ENCODE measurements at regions of chr11 and their contacts with region 1.

Region 1: DNA sequence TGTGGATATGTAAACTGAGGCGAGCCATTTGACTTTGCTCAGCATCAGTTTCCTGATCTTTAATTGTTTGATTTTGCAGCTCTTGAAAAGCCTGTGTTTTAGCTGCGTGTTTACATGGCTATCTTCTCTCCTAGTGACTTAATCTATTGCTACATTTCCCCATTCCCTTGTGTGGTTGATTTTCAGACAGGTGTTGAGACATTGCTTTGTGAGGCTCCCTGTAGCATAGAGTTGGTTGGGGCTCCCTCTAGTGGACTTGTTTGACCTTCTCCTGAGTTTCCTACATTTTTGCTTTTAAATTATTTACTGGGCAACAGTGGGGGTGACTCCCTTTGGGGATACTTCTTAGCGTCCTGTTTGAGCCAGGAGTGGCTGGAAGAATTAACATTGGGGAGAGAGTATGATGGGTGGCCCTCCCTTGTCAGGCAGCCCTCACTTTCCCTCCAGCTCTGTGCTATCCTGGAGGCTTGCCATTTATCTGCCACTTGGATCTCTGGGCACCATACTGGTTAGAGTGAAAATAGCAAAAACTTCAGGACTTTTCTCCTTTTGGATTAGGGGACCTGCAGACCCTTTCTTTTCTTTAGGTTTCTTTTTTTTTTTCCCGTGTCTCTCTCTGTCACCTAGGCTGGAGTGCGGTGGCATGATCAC is 9.2 kb upstream of the CBL start:
- DNase-seq: peak; percentile 81
- H3K4me3 ChIP-seq: no peak overlapping the region
- H3K27ac ChIP-seq: no peak overlapping the region
- H3K4me1 ChIP-seq: no peaks in the 10 kb centered on the region
- H3K27me3 ChIP-seq: no peaks in the 10 kb centered on the region
- CTCF ChIP-seq: peak; percentile 69 to 70
- POLR2A ChIP-seq: no peak

Region 2: GRCh38 chr11:119095066-119095880 is 101.7 kb before region 1 on chr11:
- CTCF ChIA-PET with region 1: interaction called, 16 read pairs
- POLR2A ChIA-PET with region 1: interaction called, 8 read pairs
- dilution Hi-C with region 1: no loop called
- intact Hi-C with region 1: loop called (anchors 1 kb)
- DNase-seq: peak; percentile 100
- H3K4me3 ChIP-seq: peak overlapping the region; percentile 70 to 95 (median 90)
- H3K27ac ChIP-seq: peak overlapping the region; percentile 59
- H3K4me1 ChIP-seq: peaks cover 27% of the 10 kb centered on the region
- H3K27me3 ChIP-seq: no peaks in the 10 kb centered on the region
- CTCF ChIP-seq: peak in 1 of 2 donors; percentile 1
- POLR2A ChIP-seq: peak; percentile 100

Region 3: GRCh38 chr11:119101759-119102423 is 95.1 kb before region 1 on chr11 and contains the start of gene DPAGT1:
- CTCF ChIA-PET with region 1: interaction called, 27 read pairs
- POLR2A ChIA-PET with region 1: no interaction called
- dilution Hi-C with region 1: no loop called
- intact Hi-C with region 1: loop called (anchors 1 kb)
- DNase-seq: peak; percentile 96
- H3K4me3 ChIP-seq: peak within 1 kb of the TSS; percentile 81 to 97 (median 86)
- H3K27ac ChIP-seq: peak within 1 kb of the TSS; percentile 94
- H3K4me1 ChIP-seq: peaks cover 21% of the 10 kb centered on the region
- H3K27me3 ChIP-seq: no peaks in the 10 kb centered on the region
- CTCF ChIP-seq: no peak
- POLR2A ChIP-seq: no peak
- total RNA-seq, gene DPAGT1: 48.4 and 62.0 TPM in 2 replicates

Region 4: GRCh38 chr11:119168471-119169281 is 28.3 kb before region 1 on chr11 and contains the start of gene NLRX1:
- CTCF ChIA-PET with region 1: interaction called, 43 read pairs
- POLR2A ChIA-PET with region 1: interaction called, 4 read pairs
- dilution Hi-C with region 1: no loop called
- intact Hi-C with region 1: loop called (anchors 1 kb)
- DNase-seq: peak; percentile 79
- H3K4me3 ChIP-seq: peak within 1 kb of the TSS; percentile 6 to 48 (median 17)
- H3K27ac ChIP-seq: peak within 1 kb of the TSS; percentile 55
- H3K4me1 ChIP-seq: peaks cover 11% of the 10 kb centered on the region
- H3K27me3 ChIP-seq: no peaks in the 10 kb centered on the region
- CTCF ChIP-seq: peak; percentile 89 to 94
- POLR2A ChIP-seq: peak; percentile 71
- total RNA-seq, gene NLRX1: 14.6 and 15.1 TPM in 2 replicates

Measured in endothelial cell of umbilical vein (primary cell).